CD4-positive, alpha-beta T cell (primary cell): ENCODE measurements at regions of chr13 and their contacts with region 1.

Region 1: GRCh38 chr13:41512441-41512840 is 55.1 kb downstream of the RGCC start:
- DNase-seq: peak in 2 of 14 experiments; percentile 30 to 38
- ATAC-seq: no peak
- H3K4me3 ChIP-seq: no peak overlapping the region
- H3K4me3 Mint-ChIP-seq: no peak overlapping the region
- H3K27ac ChIP-seq: no peak overlapping the region
- H3K27ac Mint-ChIP-seq: no peak overlapping the region
- H3K4me1 ChIP-seq: peaks cover 3% of the 10 kb centered on the region
- H3K4me1 Mint-ChIP-seq: no peaks in the 10 kb centered on the region
- H3K27me3 ChIP-seq: no peaks in the 10 kb centered on the region
- H3K27me3 Mint-ChIP-seq: no peaks in the 10 kb centered on the region
- CTCF ChIP-seq: no peak

Region 2: GRCh38 chr13:41492404-41493260 is 19.8 kb before region 1 on chr13:
- CTCF ChIA-PET with region 1: no interaction called
- POLR2A ChIA-PET with region 1: no interaction called
- intact Hi-C with region 1: no loop called
- DNase-seq: peak in 9 of 14 experiments; percentile 17 to 79 (median 32)
- ATAC-seq: peak; percentile 80
- H3K4me3 ChIP-seq: peak overlapping the region; percentile 6
- H3K4me3 Mint-ChIP-seq: peak overlapping the region; percentile 81
- H3K27ac ChIP-seq: peak overlapping the region; percentile 86 to 94
- H3K27ac Mint-ChIP-seq: peak overlapping the region; percentile 100
- H3K4me1 ChIP-seq: peaks cover 66% of the 10 kb centered on the region
- H3K4me1 Mint-ChIP-seq: peaks cover 91% of the 10 kb centered on the region
- H3K27me3 ChIP-seq: no peaks in the 10 kb centered on the region
- H3K27me3 Mint-ChIP-seq: no peaks in the 10 kb centered on the region
- CTCF ChIP-seq: no peak

Region 3: GRCh38 chr13:41554626-41555386 is 42.4 kb after region 1 on chr13:
- CTCF ChIA-PET with region 1: no interaction called
- POLR2A ChIA-PET with region 1: no interaction called
- intact Hi-C with region 1: loop called in 1 of 2 experiments (anchors 5 kb)
- DNase-seq: no peak
- ATAC-seq: no peak
- H3K4me3 ChIP-seq: no peak overlapping the region
- H3K4me3 Mint-ChIP-seq: no peak overlapping the region
- H3K27ac ChIP-seq: no peak overlapping the region
- H3K27ac Mint-ChIP-seq: no peak overlapping the region
- H3K4me1 ChIP-seq: peaks cover 6% of the 10 kb centered on the region
- H3K4me1 Mint-ChIP-seq: no peaks in the 10 kb centered on the region
- H3K27me3 ChIP-seq: no peaks in the 10 kb centered on the region
- H3K27me3 Mint-ChIP-seq: no peaks in the 10 kb centered on the region
- CTCF ChIP-seq: no peak